Naive thymus-derived CD4-positive, alpha-beta T cell (primary cell): ENCODE measurements at regions of chr12 and their contacts with region 1.

Region 1: DNA sequence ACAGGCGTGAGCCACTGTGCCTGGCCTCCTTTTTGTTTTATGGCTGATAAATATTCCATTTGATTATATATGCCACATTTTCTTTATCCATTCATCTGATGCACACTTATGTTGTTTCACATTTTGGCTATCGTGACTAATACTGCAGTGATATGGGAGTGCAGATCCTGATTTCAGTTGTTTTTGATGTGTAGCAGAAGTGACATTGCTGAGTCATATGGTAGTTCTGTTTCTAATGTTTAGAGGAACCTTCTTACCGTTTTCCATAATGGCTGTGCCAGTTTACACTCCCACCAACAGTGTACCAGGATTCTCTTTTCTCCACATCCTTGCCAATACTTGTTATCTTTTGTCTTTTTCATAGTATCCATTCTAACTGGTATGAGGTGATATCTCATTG is 235.9 kb downstream of the ERC1 start:
- DNase-seq: no peak
- ATAC-seq: peak; percentile 49
- H3K4me3 ChIP-seq: no peak overlapping the region
- H3K4me3 Mint-ChIP-seq: no peak overlapping the region
- H3K27ac ChIP-seq: no peak overlapping the region
- H3K27ac Mint-ChIP-seq: no peak overlapping the region
- H3K4me1 ChIP-seq: no peaks in the 10 kb centered on the region
- H3K4me1 Mint-ChIP-seq: peaks cover 6 to 13% (median 9%) of the 10 kb centered on the region in 7 donors
- H3K27me3 ChIP-seq: no peaks in the 10 kb centered on the region
- H3K27me3 Mint-ChIP-seq: no peaks in the 10 kb centered on the region

Region 2: DNA sequence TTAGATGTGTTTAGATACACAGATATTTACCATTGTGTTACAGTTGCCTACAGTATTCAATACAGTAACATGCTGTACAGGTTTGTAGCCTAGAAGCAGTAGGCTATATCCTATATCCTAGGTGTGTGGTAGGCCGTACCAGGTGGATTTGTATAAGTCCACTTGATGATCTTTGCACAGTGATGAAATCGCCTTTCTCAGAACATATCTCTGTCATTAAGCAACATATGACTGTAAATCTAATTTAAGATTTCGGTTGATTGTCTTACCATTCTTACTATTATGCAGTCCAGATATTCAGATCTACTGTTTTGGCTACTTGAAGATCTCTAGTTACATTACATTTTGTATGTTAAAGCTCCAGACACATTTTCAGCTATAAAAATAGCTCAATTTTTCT is 196.2 kb before region 1 on chr12:
- CTCF ChIA-PET with region 1: no interaction called
- POLR2A ChIA-PET with region 1: no interaction called
- intact Hi-C with region 1: no loop called
- DNase-seq: no peak
- ATAC-seq: no peak
- H3K4me3 ChIP-seq: no peak overlapping the region
- H3K4me3 Mint-ChIP-seq: no peak overlapping the region
- H3K27ac ChIP-seq: no peak overlapping the region
- H3K27ac Mint-ChIP-seq: no peak overlapping the region
- H3K4me1 ChIP-seq: no peaks in the 10 kb centered on the region
- H3K4me1 Mint-ChIP-seq: peaks cover 2 to 21% (median 6%) of the 10 kb centered on the region in 7 donors
- H3K27me3 ChIP-seq: no peaks in the 10 kb centered on the region
- H3K27me3 Mint-ChIP-seq: no peaks in the 10 kb centered on the region

Region 3: DNA sequence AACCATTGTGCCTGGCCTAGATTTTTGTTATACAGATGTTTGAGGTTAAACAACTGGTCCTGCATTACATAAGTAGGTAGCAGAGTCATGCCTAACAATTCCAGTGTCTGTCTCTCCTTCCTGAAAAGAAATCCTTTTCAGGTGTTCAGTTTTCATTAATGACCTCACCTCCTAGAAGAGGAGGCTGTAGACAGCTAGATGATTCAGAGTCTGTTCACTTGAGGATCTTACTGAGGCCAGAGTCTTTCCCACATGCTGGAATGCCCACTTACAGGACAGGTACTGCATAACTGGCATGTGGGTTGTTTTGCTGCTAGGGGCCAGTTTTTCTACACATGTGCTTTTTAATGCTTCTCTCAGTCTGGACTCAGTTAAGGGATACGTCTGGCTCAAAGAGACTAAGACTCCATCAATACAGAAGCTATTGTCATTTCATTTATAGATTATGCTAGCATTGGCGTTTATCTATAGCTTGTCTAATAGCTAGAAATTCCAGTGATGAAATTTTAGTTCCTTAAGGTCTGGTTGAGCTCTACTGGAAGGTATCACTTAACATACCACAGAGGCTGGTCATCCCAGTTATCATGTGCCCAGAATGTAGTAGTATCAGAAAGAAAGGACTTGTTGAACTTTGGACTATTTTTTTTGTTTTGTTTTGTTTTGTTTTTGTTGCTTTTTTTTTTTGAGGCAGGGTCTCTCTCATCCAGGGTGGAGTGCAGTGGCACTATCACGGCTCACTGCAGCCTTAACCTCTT is 29.5 kb before region 1 on chr12:
- CTCF ChIA-PET with region 1: interaction called, 3 read pairs
- POLR2A ChIA-PET with region 1: no interaction called
- intact Hi-C with region 1: loop called in 1 of 2 experiments (anchors 5 kb)
- DNase-seq: no peak
- ATAC-seq: no peak
- H3K4me3 ChIP-seq: no peak overlapping the region
- H3K4me3 Mint-ChIP-seq: no peak overlapping the region
- H3K27ac ChIP-seq: no peak overlapping the region
- H3K27ac Mint-ChIP-seq: peak overlapping the region in 2 of 9 donors; percentile 17 to 30
- H3K4me1 ChIP-seq: peaks cover 0 to 10% of the 10 kb centered on the region in 2 donors
- H3K4me1 Mint-ChIP-seq: peaks cover 3 to 9% (median 5%) of the 10 kb centered on the region in 7 donors
- H3K27me3 ChIP-seq: no peaks in the 10 kb centered on the region
- H3K27me3 Mint-ChIP-seq: no peaks in the 10 kb centered on the region